Right ventricle myocardium superior (tissue), 1 donor: ENCODE measurements at regions of chr18 and their contacts with region 1.

Region 1: GRCh38 chr18:4172196-4173100 is 282.7 kb downstream of the DLGAP1 start:
- DNase-seq: no peak
- ATAC-seq: no peak

Region 2: DNA sequence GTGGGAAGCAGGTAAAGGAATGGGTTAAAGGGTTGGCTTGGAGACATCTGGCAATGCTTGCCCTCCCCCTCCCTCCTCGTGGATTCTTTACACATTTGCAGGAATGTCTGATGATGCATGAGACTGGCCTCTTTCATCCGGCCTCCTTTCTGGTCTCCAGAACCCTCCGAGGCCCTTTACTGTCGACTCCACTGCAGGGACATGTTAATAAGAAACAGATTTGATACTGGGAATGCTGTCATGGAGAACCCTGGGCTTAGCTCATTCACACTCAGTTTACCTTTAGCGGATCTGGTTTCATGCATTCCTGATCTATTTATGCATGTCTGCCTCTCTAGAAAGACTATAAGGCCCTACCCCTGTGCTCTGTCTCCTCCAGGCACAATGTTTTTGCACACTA is 483.7 kb before region 1 on chr18:
- intact Hi-C with region 1: no loop called
- DNase-seq: no peak
- ATAC-seq: no peak

Region 3: GRCh38 chr18:4106407-4107033 is 65.9 kb before region 1 on chr18:
- intact Hi-C with region 1: no loop called
- DNase-seq: peak; percentile 65
- ATAC-seq: peak; percentile 43

Region 4: DNA sequence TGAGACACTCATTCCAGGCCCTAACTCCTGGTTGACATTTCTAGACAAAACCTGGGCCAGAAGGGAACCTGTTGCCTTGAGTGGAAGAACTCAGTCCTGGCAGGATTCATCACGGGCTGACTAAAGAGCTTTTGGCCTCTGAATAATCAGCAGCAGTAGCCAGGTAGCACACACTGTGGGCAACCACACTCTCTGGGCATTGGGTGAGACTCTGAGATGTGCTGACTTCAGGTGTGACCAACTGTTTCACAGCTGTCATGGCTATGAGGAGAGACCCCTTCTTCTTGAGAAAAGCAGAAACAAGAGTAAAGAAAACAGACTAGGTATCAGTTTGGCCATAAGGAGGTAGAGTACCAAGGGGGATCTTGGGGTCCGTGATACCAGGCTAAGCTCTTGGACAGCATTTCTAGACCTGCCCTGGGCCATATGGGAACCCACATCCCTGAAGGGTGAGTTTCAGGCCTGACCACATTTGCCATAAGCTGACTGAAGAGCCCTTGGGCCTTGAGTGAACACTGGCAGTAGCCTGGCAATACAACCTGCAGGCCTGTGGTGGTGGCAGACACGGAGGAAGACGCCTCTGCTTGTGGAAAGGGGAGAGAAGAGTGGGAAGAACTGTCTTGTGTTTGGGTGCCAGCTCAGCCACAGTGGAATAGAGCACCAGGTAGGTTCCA is 51.7 kb after region 1 on chr18:
- intact Hi-C with region 1: loop called (anchors 5 kb)
- DNase-seq: no peak
- ATAC-seq: no peak